Dendritic cell treated with granulocyte-macrophage colony-stimulating factor and Interleukin-4, amounts not matched to agents 40 ng/mL and 50 ng/mL, for 4 days (primary cell): ENCODE measurements at regions of chr6 and their contacts with region 1.

Region 1: GRCh38 chr6:72411872-72412708 is 209.8 kb upstream of the KCNQ5 start:
- H3K4me3 Mint-ChIP-seq: no peak overlapping the region
- H3K27ac Mint-ChIP-seq: no peak overlapping the region
- H3K4me1 Mint-ChIP-seq: no peaks in the 10 kb centered on the region
- H3K27me3 Mint-ChIP-seq: peaks cover 1% of the 10 kb centered on the region

Region 2: GRCh38 chr6:72363844-72364740 is 48.0 kb before region 1 on chr6:
- intact Hi-C with region 1: no loop called
- H3K4me3 Mint-ChIP-seq: no peak overlapping the region
- H3K27ac Mint-ChIP-seq: no peak overlapping the region
- H3K4me1 Mint-ChIP-seq: no peaks in the 10 kb centered on the region
- H3K27me3 Mint-ChIP-seq: peaks cover 1% of the 10 kb centered on the region

Region 3: GRCh38 chr6:72622094-72622940 is 210.2 kb after region 1 on chr6:
- intact Hi-C with region 1: loop called (anchors 10 kb)
- H3K4me3 Mint-ChIP-seq: peak overlapping the region; percentile 81
- H3K27ac Mint-ChIP-seq: no peak overlapping the region
- H3K4me1 Mint-ChIP-seq: peaks cover 33% of the 10 kb centered on the region
- H3K27me3 Mint-ChIP-seq: peaks cover 32% of the 10 kb centered on the region

Region 4: DNA sequence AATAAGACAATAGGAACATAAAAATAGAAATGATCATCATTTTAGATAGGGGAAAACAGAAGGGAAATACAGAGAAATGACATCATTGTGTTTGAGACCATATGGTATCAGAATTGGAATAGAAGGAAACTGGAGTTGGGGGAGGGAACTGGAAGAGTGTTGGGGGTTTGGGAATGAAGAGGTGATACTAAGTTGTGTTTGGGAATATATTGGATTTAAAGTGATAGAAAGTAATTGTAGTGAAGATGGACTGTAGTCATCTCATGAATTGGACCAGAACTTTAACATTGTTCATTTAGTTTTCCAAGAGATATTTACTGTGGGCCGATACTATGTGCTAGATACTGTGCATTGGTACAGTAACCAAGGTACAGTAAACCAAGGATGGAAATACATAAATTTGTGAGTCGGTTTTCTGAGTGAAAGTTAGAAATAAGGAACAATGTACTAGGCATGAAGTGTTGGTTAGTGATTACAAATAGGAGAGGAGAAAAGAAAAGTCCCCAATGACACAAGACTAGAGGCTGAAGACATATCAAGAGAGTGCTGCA is 242.1 kb after region 1 on chr6:
- intact Hi-C with region 1: no loop called
- H3K4me3 Mint-ChIP-seq: no peak overlapping the region
- H3K27ac Mint-ChIP-seq: no peak overlapping the region
- H3K4me1 Mint-ChIP-seq: peaks cover 6% of the 10 kb centered on the region
- H3K27me3 Mint-ChIP-seq: no peaks in the 10 kb centered on the region

Region 5: DNA sequence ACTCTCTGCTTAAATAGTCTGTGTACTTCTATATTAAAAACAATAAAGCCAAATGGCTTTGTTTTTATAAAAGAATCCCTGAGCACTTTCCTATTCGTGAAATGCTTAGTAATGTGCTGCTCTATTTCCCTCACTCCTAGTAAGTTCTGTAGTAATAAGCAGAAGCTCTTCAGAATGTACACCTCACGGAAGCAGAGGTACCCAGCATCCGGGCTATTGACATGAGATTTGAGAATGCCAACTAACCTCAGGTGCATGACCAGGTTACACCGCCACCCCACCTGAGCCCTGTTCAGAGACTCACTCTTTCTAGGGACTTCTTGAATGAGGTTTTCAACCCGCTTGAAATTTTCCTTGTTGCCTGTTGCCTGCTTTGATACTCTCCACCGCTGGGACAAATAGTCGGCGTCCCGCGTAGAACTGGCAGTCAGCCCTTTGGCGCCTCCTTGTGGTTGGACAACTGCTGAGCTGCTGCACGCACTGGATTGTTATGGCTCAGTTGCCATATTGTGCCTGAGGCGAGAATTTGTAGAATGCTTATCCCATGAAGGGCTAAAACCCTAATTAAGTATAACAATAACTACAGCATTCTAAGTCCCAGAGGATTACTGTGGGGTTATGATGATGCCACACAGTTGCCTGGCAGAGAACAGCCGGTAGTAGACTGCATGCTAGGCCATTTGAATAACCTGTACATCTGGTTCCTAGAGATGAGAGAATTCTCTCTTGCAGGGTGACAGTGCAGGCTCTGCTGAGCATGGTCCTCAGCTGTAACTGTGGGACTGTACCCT is 717.8 kb after region 1 on chr6:
- intact Hi-C with region 1: loop called (anchors 1 kb)
- H3K4me3 Mint-ChIP-seq: no peak overlapping the region
- H3K27ac Mint-ChIP-seq: no peak overlapping the region
- H3K4me1 Mint-ChIP-seq: no peaks in the 10 kb centered on the region
- H3K27me3 Mint-ChIP-seq: peaks cover 1% of the 10 kb centered on the region

Region 6: GRCh38 chr6:73180763-73181619 is 768.9 kb after region 1 on chr6:
- intact Hi-C with region 1: loop called (anchors 1 kb)
- H3K4me3 Mint-ChIP-seq: no peak overlapping the region
- H3K27ac Mint-ChIP-seq: no peak overlapping the region
- H3K4me1 Mint-ChIP-seq: no peaks in the 10 kb centered on the region
- H3K27me3 Mint-ChIP-seq: no peaks in the 10 kb centered on the region

Region 7: GRCh38 chr6:73329201-73329600 is 917.1 kb after region 1 on chr6:
- intact Hi-C with region 1: loop called (anchors 2 kb)
- H3K4me3 Mint-ChIP-seq: no peak overlapping the region
- H3K27ac Mint-ChIP-seq: no peak overlapping the region
- H3K4me1 Mint-ChIP-seq: no peaks in the 10 kb centered on the region
- H3K27me3 Mint-ChIP-seq: peaks cover 12% of the 10 kb centered on the region